ENCODE measurements at regions of chr7 and their contacts with region 1.

Region 1: GRCh38 chr7:151226875-151227782 is at the start of gene ABCF2:
- DNase-seq: peak; percentile 94 to 99 (median 95)
- H3K4me3 ChIP-seq: peak within 1 kb of the TSS; percentile 62 to 80
- H3K4me3 Mint-ChIP-seq: peak within 1 kb of the TSS; percentile 95 to 100 (median 96)
- H3K27ac ChIP-seq: peak within 1 kb of the TSS; percentile 83
- H3K27ac Mint-ChIP-seq: peak within 1 kb of the TSS; percentile 95 to 98 (median 96)
- H3K4me1 ChIP-seq: peaks cover 34% of the 10 kb centered on the region
- H3K4me1 Mint-ChIP-seq: peaks cover 29 to 52% (median 40%) of the 10 kb centered on the region in 4 donors
- H3K27me3 ChIP-seq: no peaks in the 10 kb centered on the region
- H3K27me3 Mint-ChIP-seq: no peaks in the 10 kb centered on the region
- total RNA-seq, gene ABCF2: 31.4 to 35.7 TPM

Region 2: DNA sequence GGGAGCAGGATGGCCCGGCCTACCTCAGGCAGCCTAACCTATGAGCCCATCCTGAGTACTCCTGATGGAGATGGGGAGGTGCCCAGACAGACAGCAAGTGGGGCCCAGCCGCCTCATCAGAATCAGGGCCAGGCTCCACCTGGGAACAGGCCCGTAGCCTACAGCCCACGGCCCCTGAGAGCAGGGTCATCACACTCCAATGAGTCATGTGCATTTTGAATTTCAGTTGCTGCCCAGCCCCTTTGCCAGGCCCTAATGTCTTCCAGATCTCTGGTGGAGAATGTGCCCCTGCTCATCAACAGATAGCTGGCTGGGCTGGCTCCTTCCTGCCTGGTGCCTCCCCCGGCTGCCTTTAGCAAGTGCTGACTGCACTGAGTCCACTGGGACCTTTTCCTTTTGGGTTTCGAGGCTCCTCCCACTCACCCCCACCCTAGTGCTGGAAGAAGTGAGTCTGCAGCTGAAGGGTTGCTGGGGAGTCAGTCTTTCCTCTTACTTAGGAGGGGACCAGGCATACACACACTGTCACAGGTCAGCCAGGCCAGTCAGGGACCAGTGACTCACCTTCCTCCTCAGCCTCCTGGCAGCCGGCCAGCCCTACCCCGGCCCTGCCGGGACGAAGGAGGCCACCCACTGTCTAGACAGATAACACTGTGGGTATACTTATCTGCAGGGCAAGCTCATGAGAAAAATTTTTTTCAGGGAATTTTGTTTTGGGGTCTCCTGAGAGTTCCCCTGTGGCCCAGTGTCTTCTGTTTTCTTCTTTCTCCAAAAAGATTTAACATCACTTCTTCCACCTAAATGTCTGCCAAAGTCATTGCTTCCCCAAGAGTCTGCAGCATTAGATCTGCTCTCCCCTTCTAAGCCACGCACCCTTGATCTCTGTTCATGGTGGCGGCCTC is 187.9 kb before region 1 on chr7:
- CTCF ChIA-PET with region 1: no interaction called
- POLR2A ChIA-PET with region 1: no interaction called
- intact Hi-C with region 1: no loop called
- DNase-seq: peak in 1 of 5 donors; percentile 63
- H3K4me3 ChIP-seq: no peak overlapping the region
- H3K4me3 Mint-ChIP-seq: no peak overlapping the region
- H3K27ac ChIP-seq: no peak overlapping the region
- H3K27ac Mint-ChIP-seq: peak overlapping the region in 4 of 7 donors; percentile 52 to 72 (median 60)
- H3K4me1 ChIP-seq: peaks cover 13% of the 10 kb centered on the region
- H3K4me1 Mint-ChIP-seq: peaks cover 0 to 13% (median 11%) of the 10 kb centered on the region in 4 donors
- H3K27me3 ChIP-seq: no peaks in the 10 kb centered on the region
- H3K27me3 Mint-ChIP-seq: no peaks in the 10 kb centered on the region

Region 3: DNA sequence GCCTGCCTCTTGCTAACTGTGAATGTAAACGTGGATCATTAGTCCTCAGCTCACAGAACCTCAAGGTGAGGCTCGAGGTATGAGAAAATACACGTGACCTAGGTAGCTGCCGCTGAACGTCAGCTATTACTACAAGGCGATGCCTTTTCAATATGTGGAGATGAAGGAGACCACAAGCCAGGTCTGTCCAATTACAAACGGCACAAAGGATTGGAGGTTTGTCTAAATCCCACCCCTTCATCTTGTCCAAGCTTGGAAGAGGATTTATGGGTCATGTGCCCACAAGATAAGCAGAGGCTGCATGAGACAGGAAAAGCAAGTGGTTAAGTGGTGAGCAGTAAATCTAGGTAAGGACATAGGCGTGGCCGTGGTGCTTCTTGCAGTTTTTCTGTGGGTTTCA is 20.2 kb before region 1 on chr7:
- CTCF ChIA-PET with region 1: interaction called, 5 read pairs
- POLR2A ChIA-PET with region 1: interaction called, 25 read pairs
- intact Hi-C with region 1: loop called (anchors 1 kb)
- DNase-seq: peak; percentile 71 to 83 (median 81)
- H3K4me3 ChIP-seq: no peak overlapping the region
- H3K4me3 Mint-ChIP-seq: peak overlapping the region; percentile 52 to 89 (median 78)
- H3K27ac ChIP-seq: peak overlapping the region; percentile 57
- H3K27ac Mint-ChIP-seq: peak overlapping the region; percentile 82 to 99 (median 98)
- H3K4me1 ChIP-seq: peaks cover 37% of the 10 kb centered on the region
- H3K4me1 Mint-ChIP-seq: peaks cover 27 to 56% (median 40%) of the 10 kb centered on the region in 4 donors
- H3K27me3 ChIP-seq: no peaks in the 10 kb centered on the region
- H3K27me3 Mint-ChIP-seq: no peaks in the 10 kb centered on the region

Region 4: GRCh38 chr7:151237244-151238189 is 10.4 kb after region 1 on chr7:
- CTCF ChIA-PET with region 1: interaction called, 33 read pairs
- POLR2A ChIA-PET with region 1: interaction called, 50 read pairs
- intact Hi-C with region 1: no loop called
- DNase-seq: no peak
- H3K4me3 ChIP-seq: no peak overlapping the region
- H3K4me3 Mint-ChIP-seq: no peak overlapping the region
- H3K27ac ChIP-seq: no peak overlapping the region
- H3K27ac Mint-ChIP-seq: no peak overlapping the region
- H3K4me1 ChIP-seq: peaks cover 21% of the 10 kb centered on the region
- H3K4me1 Mint-ChIP-seq: peaks cover 8 to 36% (median 17%) of the 10 kb centered on the region in 4 donors
- H3K27me3 ChIP-seq: no peaks in the 10 kb centered on the region
- H3K27me3 Mint-ChIP-seq: no peaks in the 10 kb centered on the region

Measured in CD4-positive, alpha-beta memory T cell (primary cell).